Dorsolateral prefrontal cortex (tissue), 120 donors: ENCODE measurements at regions of chr22 and their contacts with region 1.

Region 1: GRCh38 chr22:24555157-24556039 is at the start of gene SNRPD3:
- DNase-seq: peak; percentile 97 to 99 (median 99)
- H3K4me3 ChIP-seq: peak within 1 kb of the TSS; percentile 61 to 100 (median 99)
- H3K27ac ChIP-seq: peak within 1 kb of the TSS; percentile 77 to 100 (median 98)
- H3K27me3 ChIP-seq: no peaks in the 10 kb centered on the region
- CTCF ChIP-seq: peak in 30 of 56 donors; percentile 8 to 45 (median 28)
- total RNA-seq, gene SNRPD3: 35.6 to 96.2 (median 63.6) TPM

Region 2: GRCh38 chr22:24270638-24271408 is 284.6 kb before region 1 on chr22 and contains the start of gene SPECC1L:
- intact Hi-C with region 1: loop called in 1 of 2 experiments (anchors 2 kb)
- DNase-seq: peak; percentile 73 to 93 (median 84)
- H3K4me3 ChIP-seq: peak within 1 kb of the TSS; percentile 67 to 100 (median 95)
- H3K27ac ChIP-seq: peak within 1 kb of the TSS; percentile 41 to 99 (median 95)
- H3K27me3 ChIP-seq: no peaks in the 10 kb centered on the region
- CTCF ChIP-seq: peak in 49 of 56 donors; percentile 15 to 75 (median 51)
- total RNA-seq, gene SPECC1L: 59.5 to 136 (median 91.9) TPM

Region 3: DNA sequence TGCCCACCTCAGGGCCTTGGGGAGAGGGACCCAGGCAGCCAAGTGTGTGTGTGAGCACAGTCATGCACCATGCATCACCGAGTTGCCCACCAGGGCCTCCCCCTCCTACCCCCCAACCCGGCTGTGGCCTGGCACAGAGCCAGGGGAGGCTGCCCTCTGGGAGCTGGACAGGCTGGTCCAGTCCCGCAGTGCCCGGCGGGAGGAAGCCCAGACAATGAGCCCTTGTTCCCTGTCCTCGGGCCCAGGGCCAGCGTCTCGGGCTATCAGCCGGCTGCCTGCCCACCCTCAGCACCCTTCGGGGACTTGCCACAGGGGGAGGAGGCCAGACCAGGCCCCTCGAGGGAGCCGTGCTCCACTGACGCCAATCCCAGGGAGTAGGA is 33.0 kb after region 1 on chr22:
- intact Hi-C with region 1: loop called in 1 of 2 experiments (anchors 2 kb)
- DNase-seq: peak; percentile 37 to 94 (median 90)
- H3K4me3 ChIP-seq: peak overlapping the region in 46 of 59 donors; percentile 1 to 60 (median 33)
- H3K27ac ChIP-seq: peak overlapping the region in 58 of 59 donors; percentile 28 to 90 (median 80)
- H3K27me3 ChIP-seq: no peaks in the 10 kb centered on the region
- CTCF ChIP-seq: peak in 12 of 56 donors; percentile 4 to 37 (median 17)

Region 4: GRCh38 chr22:24758164-24758799 is 202.9 kb after region 1 on chr22:
- intact Hi-C with region 1: loop called in 1 of 2 experiments (anchors 5 kb)
- DNase-seq: peak in 5 of 10 donors; percentile 28 to 65 (median 47)
- H3K4me3 ChIP-seq: no peak overlapping the region
- H3K27ac ChIP-seq: no peak overlapping the region
- H3K27me3 ChIP-seq: peaks cover 0 to 12% (median 0%) of the 10 kb centered on the region in 45 donors
- CTCF ChIP-seq: peak; percentile 76 to 100 (median 91)